ENCODE measurements at regions of chr11 and their contacts with region 1.

Region 1: GRCh38 chr11:17207317-17208258 is at the start of gene PIK3C2A:
- DNase-seq: peak; percentile 96 to 99 (median 98)
- H3K4me3 ChIP-seq: peak within 1 kb of the TSS; percentile 68 to 95 (median 87)
- H3K27ac ChIP-seq: peak within 1 kb of the TSS; percentile 87 to 99 (median 98)
- H3K4me1 ChIP-seq: peaks cover 19 to 54% of the 10 kb centered on the region in 2 donors
- H3K27me3 ChIP-seq: no peaks in the 10 kb centered on the region
- CTCF ChIP-seq: no peak
- POLR2A ChIP-seq: peak; percentile 90 to 98
- total RNA-seq, gene PIK3C2A: 52.8 to 89.3 (median 74.0) TPM

Region 2: GRCh38 chr11:17077520-17078401 is 129.8 kb before region 1 on chr11 and contains the start of gene RPS13:
- intact Hi-C with region 1: loop called (anchors 5 to 10 kb)
- DNase-seq: peak; percentile 96 to 99 (median 98)
- H3K4me3 ChIP-seq: peak within 1 kb of the TSS; percentile 31 to 95 (median 91)
- H3K27ac ChIP-seq: peak within 1 kb of the TSS; percentile 74 to 99 (median 92)
- H3K4me1 ChIP-seq: peaks cover 13 to 36% of the 10 kb centered on the region in 2 donors
- H3K27me3 ChIP-seq: no peaks in the 10 kb centered on the region
- CTCF ChIP-seq: no peak
- POLR2A ChIP-seq: peak; percentile 83 to 91
- total RNA-seq, gene RPS13: 641 to 1,399 (median 741) TPM

Measured in adrenal gland (tissue), 19 donors.